Endothelial cell of umbilical vein (primary cell): ENCODE measurements at regions of chr11 and their contacts with region 1.

Region 1: DNA sequence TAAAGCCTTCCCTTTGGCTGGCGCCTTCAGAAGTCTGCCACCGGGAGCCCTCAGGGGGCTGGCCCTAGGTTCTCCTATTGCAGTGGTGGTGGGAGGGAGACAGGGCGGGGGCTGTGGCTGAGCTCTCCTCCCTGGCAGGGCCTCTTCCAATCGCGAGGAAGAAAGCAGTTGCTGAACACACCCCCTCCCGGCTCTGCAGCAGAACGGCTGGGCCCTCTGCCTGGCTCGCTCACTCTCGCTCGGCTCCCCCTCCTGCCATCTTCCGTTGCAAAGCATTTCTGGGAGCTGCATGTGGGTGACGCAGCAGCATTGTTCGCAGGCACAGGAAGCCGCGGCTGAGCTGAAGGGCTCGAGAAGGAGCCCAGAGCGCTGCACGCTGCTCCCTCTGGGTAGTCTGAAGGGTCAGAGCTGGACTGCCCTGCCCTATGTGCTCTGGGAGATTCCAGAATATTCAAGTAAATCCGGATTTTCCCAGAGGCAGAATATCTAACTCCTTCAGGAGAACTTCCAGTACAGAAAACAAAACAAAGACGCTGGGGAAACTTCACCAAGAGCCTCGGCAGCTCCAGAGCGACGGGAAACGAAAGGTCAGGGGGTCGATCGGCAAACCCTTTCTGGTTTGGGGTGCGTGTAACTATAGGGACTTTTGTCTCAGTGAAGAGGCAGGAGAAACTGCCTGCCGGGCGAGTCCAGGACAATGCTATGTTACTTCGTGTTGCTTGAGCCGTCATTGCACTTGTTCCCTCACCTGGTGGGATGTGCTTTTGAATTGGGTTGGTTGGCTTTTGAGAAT is 26.3 kb upstream of the GRK2 start:
- DNase-seq: peak; percentile 100
- H3K4me3 ChIP-seq: peak overlapping the region; percentile 78 to 90 (median 81)
- H3K27ac ChIP-seq: peak overlapping the region; percentile 83
- H3K4me1 ChIP-seq: peaks cover 23% of the 10 kb centered on the region
- H3K27me3 ChIP-seq: no peaks in the 10 kb centered on the region
- CTCF ChIP-seq: peak in 1 of 2 donors; percentile 9
- POLR2A ChIP-seq: peak; percentile 99

Region 2: DNA sequence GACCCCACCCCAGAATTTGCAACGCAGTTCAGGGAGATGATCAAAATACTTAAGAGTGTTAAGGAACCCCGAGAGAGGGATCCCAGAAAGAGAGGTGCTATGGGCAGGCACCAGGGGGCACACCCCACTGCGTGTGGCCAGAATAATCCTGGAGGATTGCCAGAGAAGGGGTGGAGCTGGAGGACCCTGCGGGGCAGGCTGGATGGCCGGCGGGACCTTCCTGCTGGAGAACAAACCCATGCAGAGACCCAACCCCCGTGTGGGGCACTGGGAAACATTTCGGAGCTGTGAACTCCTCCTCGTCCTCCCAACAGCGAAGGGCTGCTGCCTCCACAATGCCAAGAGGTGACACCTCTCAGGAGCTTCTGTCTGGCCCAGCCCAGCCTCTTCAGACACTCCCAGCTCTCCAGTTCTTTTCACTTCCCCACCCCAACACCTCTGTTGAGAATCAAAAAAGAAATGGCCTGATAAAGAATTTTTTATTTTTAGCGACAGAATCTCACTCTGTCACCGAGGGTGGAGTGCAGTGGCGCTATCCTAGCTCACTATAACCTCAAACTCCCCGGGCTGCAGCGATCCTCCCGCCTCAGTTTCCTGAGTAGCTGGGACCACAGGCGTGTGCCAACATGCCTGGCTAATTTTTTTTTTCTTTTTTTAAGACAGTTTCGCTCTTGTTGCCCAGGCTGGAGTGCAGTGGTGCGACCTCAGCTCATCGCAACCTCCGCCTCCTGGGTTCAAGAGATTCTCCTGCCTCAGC is 157.8 kb before region 1 on chr11:
- CTCF ChIA-PET with region 1: interaction called, 22 read pairs
- POLR2A ChIA-PET with region 1: no interaction called
- dilution Hi-C with region 1: no loop called
- intact Hi-C with region 1: loop called (anchors 1 kb)
- DNase-seq: peak; percentile 30
- H3K4me3 ChIP-seq: no peak overlapping the region
- H3K27ac ChIP-seq: no peak overlapping the region
- H3K4me1 ChIP-seq: no peaks in the 10 kb centered on the region
- H3K27me3 ChIP-seq: no peaks in the 10 kb centered on the region
- CTCF ChIP-seq: peak in 1 of 2 donors; percentile 18
- POLR2A ChIP-seq: no peak

Region 3: DNA sequence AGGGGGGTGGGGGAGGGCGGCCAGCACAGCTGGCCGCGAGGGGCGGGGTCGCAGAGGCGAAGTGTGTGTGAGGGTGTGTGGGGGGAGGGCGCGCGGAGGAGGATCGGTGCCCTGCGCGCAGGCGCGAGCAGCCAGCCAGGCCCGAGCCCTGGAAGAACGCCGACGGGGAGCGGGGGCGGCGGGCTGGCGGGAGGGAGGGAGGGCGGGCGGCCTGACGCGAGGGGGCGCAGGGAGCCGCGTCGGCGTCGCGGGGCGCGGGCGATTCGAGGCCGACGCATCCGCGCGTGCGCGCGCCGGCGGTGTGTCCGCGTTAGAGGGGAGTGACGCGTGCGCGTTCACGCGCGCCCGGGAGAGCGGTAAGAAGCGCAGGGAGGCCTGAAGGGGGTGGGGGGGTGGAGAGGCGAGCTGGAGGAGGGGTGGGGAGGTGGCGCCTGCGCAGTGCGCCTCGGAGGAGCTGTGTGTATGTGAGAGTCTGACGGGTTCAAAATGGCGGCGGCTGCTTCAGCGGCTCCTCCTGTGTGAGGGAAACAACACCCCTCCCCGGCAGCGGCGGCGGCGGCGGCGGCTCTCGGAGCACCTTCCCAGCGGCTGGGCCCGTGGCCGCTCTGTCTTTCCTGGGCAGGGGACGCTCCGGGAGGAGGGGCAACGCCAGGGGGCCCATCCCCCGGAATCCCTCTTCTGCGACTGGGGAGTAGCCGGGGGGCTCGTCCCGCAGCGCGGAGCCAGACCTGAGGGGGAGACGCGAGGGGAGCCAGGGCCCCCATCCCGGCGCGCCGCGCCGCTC is 121.0 kb before region 1 on chr11 and contains the start of gene KDM2A:
- CTCF ChIA-PET with region 1: interaction called, 3 read pairs
- POLR2A ChIA-PET with region 1: interaction called, 3 read pairs
- dilution Hi-C with region 1: no loop called
- intact Hi-C with region 1: loop called (anchors 1 kb)
- DNase-seq: peak; percentile 98
- H3K4me3 ChIP-seq: peak within 1 kb of the TSS; percentile 83 to 96 (median 96)
- H3K27ac ChIP-seq: peak within 1 kb of the TSS; percentile 86
- H3K4me1 ChIP-seq: peaks cover 21% of the 10 kb centered on the region
- H3K27me3 ChIP-seq: no peaks in the 10 kb centered on the region
- CTCF ChIP-seq: no peak
- POLR2A ChIP-seq: peak; percentile 71
- total RNA-seq, gene KDM2A: 69.9 and 79.5 TPM in 2 replicates

Region 4: GRCh38 chr11:67204822-67205221 is 35.2 kb before region 1 on chr11:
- CTCF ChIA-PET with region 1: no interaction called
- POLR2A ChIA-PET with region 1: no interaction called
- dilution Hi-C with region 1: no loop called
- intact Hi-C with region 1: loop called (anchors 5 kb)
- DNase-seq: no peak
- H3K4me3 ChIP-seq: no peak overlapping the region
- H3K27ac ChIP-seq: no peak overlapping the region
- H3K4me1 ChIP-seq: no peaks in the 10 kb centered on the region
- H3K27me3 ChIP-seq: no peaks in the 10 kb centered on the region
- CTCF ChIP-seq: no peak
- POLR2A ChIP-seq: no peak

Region 5: GRCh38 chr11:67277231-67277961 is 37.4 kb after region 1 on chr11:
- CTCF ChIA-PET with region 1: no interaction called
- POLR2A ChIA-PET with region 1: no interaction called
- dilution Hi-C with region 1: no loop called
- intact Hi-C with region 1: no loop called
- DNase-seq: peak; percentile 88
- H3K4me3 ChIP-seq: no peak overlapping the region
- H3K27ac ChIP-seq: peak overlapping the region; percentile 76
- H3K4me1 ChIP-seq: peaks cover 17% of the 10 kb centered on the region
- H3K27me3 ChIP-seq: no peaks in the 10 kb centered on the region
- CTCF ChIP-seq: no peak
- POLR2A ChIP-seq: no peak

Region 6: DNA sequence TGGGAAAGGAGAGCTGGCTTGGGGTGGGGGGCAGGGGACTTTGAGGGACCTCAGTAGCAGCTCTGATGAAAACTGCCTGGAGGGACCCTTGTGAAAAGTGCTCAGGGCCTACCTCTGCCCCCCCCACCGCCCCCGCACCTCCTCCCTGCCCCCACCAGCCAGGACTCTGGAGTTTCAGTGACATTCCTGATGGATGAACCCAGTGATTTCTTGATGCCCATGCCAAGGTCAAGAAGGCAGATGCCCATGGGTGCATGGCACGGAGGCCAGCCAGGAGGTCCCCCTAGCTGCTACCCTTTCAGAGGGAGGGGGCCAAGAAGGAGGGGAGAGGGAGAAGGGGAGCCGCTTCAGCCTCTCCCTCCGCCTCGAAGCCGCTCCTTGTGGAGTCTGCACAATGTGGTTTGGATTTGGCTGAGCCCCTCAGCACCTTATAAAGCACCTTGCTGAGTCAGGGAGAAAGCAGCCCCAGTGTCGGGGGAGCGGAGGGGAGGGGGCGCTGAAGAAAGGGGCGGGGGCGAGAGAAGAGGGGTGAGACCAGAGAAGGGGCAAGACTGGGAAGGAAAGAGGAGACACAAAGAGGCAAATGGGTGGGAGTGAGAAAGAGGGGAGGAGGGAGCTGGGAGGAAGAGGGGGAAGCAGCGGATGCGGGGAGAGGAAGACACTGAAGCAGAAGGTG is 135.5 kb after region 1 on chr11:
- CTCF ChIA-PET with region 1: no interaction called
- POLR2A ChIA-PET with region 1: no interaction called
- dilution Hi-C with region 1: no loop called
- intact Hi-C with region 1: no loop called
- DNase-seq: no peak
- H3K4me3 ChIP-seq: no peak overlapping the region
- H3K27ac ChIP-seq: no peak overlapping the region
- H3K4me1 ChIP-seq: peaks cover 25% of the 10 kb centered on the region
- H3K27me3 ChIP-seq: peaks cover 0 to 3% of the 10 kb centered on the region in 2 experiments
- CTCF ChIP-seq: no peak
- POLR2A ChIP-seq: no peak

Region 7: GRCh38 chr11:67572747-67573419 is 332.9 kb after region 1 on chr11:
- CTCF ChIA-PET with region 1: no interaction called
- POLR2A ChIA-PET with region 1: no interaction called
- dilution Hi-C with region 1: no loop called
- intact Hi-C with region 1: no loop called
- DNase-seq: peak; percentile 51
- H3K4me3 ChIP-seq: no peak overlapping the region
- H3K27ac ChIP-seq: peak overlapping the region; percentile 55
- H3K4me1 ChIP-seq: peaks cover 24% of the 10 kb centered on the region
- H3K27me3 ChIP-seq: no peaks in the 10 kb centered on the region
- CTCF ChIP-seq: peak; percentile 65 to 80
- POLR2A ChIP-seq: no peak